Gastrocnemius medialis (tissue), 4 donors: ENCODE measurements at regions of chr13 and their contacts with region 1.

Region 1: DNA sequence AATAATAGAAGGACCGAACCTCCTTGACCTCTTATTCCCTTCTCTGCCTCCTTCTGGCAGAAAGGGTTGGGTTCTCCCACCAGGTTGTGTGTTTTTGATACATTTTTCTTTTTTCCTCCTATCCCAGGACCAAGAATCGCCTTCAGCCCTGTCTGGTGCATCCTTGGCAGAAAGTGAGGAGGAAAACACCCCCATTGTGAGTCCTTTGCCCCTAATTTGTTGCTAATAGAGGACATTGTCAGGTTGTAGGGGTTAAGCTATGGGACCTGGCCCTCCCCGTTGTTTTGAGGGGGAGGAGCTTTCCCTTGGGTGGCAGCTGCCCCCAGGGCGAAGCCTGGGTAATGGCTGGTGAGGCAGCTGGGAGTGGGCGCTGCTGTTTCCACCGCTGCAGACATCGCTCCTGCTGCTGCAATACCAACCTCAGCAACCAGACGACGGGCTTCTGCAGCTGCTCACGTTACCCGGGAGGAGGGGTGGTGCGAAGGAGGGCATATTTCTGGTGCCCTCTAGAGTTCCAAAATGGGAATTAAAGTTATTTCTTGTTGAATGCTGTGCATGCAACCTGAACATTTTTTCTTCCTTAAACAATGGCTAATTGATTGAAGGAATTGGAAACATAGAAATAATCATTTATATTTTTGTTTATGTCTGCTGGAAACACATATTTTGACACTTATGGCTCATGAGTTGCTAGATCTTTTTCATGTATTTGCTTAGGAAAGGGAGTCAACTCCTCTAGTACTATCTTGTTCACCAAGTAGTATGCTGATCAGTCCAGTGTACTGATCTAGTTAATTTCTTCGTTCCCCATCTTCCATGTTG is 1.5 kb downstream of the ZMYM2 start:
- DNase-seq: peak; percentile 80 to 89
- ATAC-seq: peak; percentile 64 to 70
- H3K4me3 ChIP-seq: peak overlapping the region; percentile 74 to 97 (median 86)
- H3K27ac ChIP-seq: peak overlapping the region; percentile 96 to 98 (median 97)
- H3K4me1 ChIP-seq: peaks cover 19 to 39% of the 10 kb centered on the region in 2 donors
- H3K27me3 ChIP-seq: no peaks in the 10 kb centered on the region
- CTCF ChIP-seq: peak; percentile 78 to 99 (median 85)
- POLR2A ChIP-seq: peak; percentile 42 to 60

Region 2: GRCh38 chr13:19633479-19634255 is 326.4 kb before region 1 on chr13 and contains the start of gene MPHOSPH8:
- in situ Hi-C with region 1: loop called in 1 of 4 experiments (anchors 25 kb)
- intact Hi-C with region 1: loop called (anchors 1 kb)
- DNase-seq: peak; percentile 93 to 94
- ATAC-seq: peak; percentile 98 to 99
- H3K4me3 ChIP-seq: peak within 1 kb of the TSS; percentile 63 to 93 (median 88)
- H3K27ac ChIP-seq: peak within 1 kb of the TSS; percentile 87 to 97 (median 93)
- H3K4me1 ChIP-seq: peaks cover 19 to 22% of the 10 kb centered on the region in 2 donors
- H3K27me3 ChIP-seq: no peaks in the 10 kb centered on the region
- CTCF ChIP-seq: no peak
- POLR2A ChIP-seq: peak; percentile 86 to 87
- total RNA-seq, gene MPHOSPH8: 8.0 to 15.5 (median 13.4) TPM

Region 3: GRCh38 chr13:19782049-19782726 is 177.9 kb before region 1 on chr13:
- in situ Hi-C with region 1: no loop called
- intact Hi-C with region 1: loop called (anchors 1 kb)
- DNase-seq: peak; percentile 15 to 47
- ATAC-seq: peak; percentile 73 to 81
- H3K4me3 ChIP-seq: peak overlapping the region; percentile 81 to 99 (median 92)
- H3K27ac ChIP-seq: peak overlapping the region; percentile 89 to 98 (median 94)
- H3K4me1 ChIP-seq: peaks cover 3 to 9% of the 10 kb centered on the region in 2 donors
- H3K27me3 ChIP-seq: no peaks in the 10 kb centered on the region
- CTCF ChIP-seq: no peak
- POLR2A ChIP-seq: no peak

Region 4: GRCh38 chr13:19927117-19927748 is 32.8 kb before region 1 on chr13:
- in situ Hi-C with region 1: no loop called
- intact Hi-C with region 1: loop called (anchors 1 kb)
- DNase-seq: no peak
- ATAC-seq: peak; percentile 55 to 79
- H3K4me3 ChIP-seq: no peak overlapping the region
- H3K27ac ChIP-seq: no peak overlapping the region
- H3K4me1 ChIP-seq: no peaks in the 10 kb centered on the region
- H3K27me3 ChIP-seq: no peaks in the 10 kb centered on the region
- CTCF ChIP-seq: peak; percentile 46 to 65 (median 60)
- POLR2A ChIP-seq: no peak

Region 5: DNA sequence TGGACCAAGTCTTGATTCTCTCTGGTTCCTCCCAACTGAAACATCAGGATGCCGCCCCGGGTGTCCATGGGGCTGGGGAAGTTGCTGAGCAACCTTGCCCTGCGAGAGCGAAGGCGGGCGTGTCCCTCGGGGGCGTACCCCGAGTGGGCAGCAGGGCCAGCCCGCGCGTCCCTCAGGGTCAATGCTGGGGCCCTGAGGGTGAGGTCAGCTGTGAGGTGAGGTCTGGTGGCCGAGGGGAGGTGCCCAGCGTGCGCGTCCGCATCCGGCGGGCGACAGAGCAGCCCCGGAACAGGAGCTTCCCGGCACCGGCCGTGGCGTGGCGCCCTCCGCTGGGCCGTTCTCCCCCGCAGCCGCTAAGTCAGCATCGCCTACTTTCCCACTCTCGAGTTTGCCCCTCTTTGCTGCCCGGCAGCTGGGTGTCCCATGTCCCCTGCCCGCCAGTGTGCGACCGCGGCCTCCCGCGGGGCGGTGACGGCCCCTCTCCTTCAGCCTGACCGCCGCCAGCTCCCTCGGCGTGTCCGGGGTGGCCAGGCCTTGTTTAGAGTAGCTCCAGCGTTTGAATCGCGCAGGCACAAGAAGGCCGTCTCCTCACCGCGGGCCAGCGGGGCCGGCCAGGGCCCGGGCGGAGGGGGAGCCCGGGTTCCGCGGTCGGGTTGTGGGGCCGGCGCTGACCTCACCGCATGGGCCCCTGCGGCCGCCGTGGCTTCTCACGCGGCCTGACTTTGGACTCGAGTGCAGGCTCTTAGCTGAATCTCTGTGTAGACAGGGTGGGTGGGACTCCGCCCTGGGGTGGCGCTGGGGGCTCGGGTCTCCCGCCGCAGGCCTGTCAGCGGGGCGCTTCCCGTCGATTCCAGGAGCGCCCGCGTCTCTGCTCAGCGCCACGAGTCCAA is 167.8 kb after region 1 on chr13:
- in situ Hi-C with region 1: no loop called
- intact Hi-C with region 1: no loop called
- DNase-seq: peak; percentile 47 to 60
- ATAC-seq: peak; percentile 80 to 83
- H3K4me3 ChIP-seq: peak overlapping the region; percentile 58 to 69 (median 66)
- H3K27ac ChIP-seq: peak overlapping the region; percentile 71 to 79 (median 72)
- H3K4me1 ChIP-seq: peaks cover 15 to 16% of the 10 kb centered on the region in 2 donors
- H3K27me3 ChIP-seq: no peaks in the 10 kb centered on the region
- CTCF ChIP-seq: peak in 3 of 5 experiments; percentile 25 to 58 (median 51)
- POLR2A ChIP-seq: peak in 1 of 2 donors; percentile 35